Left ventricle myocardium superior (tissue), 1 donor: ENCODE measurements at regions of chr10 and their contacts with region 1.

Region 1: GRCh38 chr10:7400068-7400715 is 10.6 kb downstream of the SFMBT2 start:
- DNase-seq: peak; percentile 62
- ATAC-seq: peak; percentile 68

Region 2: DNA sequence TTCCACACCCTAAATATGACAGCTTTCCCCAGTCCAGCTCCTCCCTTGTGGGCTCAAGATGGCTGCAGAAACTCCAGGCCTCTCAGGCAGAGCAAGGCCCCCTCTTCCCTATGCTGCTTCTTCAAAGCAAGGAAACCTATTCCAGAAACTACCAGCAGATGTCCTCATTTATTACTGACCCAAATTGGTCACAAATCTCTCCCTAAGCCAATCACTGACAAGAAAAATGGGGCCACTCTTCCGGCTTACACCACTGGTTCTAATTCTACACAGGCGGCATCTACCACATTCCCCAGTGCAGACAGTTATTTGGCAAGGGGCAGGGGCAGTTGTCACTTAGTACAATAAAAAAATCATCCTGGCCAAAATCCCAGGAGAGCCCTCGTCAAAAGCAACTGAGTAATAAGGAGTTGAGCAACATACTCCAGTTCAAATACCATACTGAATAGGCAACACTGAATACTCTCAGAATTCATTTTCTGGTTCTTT is 139.7 kb before region 1 on chr10:
- intact Hi-C with region 1: loop called (anchors 5 kb)
- DNase-seq: peak; percentile 64
- ATAC-seq: peak; percentile 97